ENCODE measurements at regions of chr7 and their contacts with region 1.

Region 1: GRCh38 chr7:142459551-142459963 is 201.7 kb upstream of the PRSS58 start:
- DNase-seq: peak; percentile 56
- ATAC-seq: peak; percentile 63
- H3K4me3 Mint-ChIP-seq: peak overlapping the region; percentile 7
- H3K27ac Mint-ChIP-seq: no peak overlapping the region
- H3K4me1 Mint-ChIP-seq: peaks cover 49% of the 10 kb centered on the region
- H3K27me3 Mint-ChIP-seq: no peaks in the 10 kb centered on the region

Region 2: GRCh38 chr7:142469696-142470543 is 10.4 kb after region 1 on chr7:
- CTCF ChIA-PET with region 1: interaction called, 18 read pairs
- POLR2A ChIA-PET with region 1: no interaction called
- intact Hi-C with region 1: no loop called
- DNase-seq: no peak
- ATAC-seq: no peak
- H3K4me3 Mint-ChIP-seq: no peak overlapping the region
- H3K27ac Mint-ChIP-seq: no peak overlapping the region
- H3K4me1 Mint-ChIP-seq: peaks cover 50% of the 10 kb centered on the region
- H3K27me3 Mint-ChIP-seq: no peaks in the 10 kb centered on the region

Region 3: GRCh38 chr7:142496545-142497041 is 37.0 kb after region 1 on chr7:
- CTCF ChIA-PET with region 1: interaction called, 26 read pairs
- POLR2A ChIA-PET with region 1: no interaction called
- intact Hi-C with region 1: loop called in 1 of 2 experiments (anchors 5 kb)
- DNase-seq: peak; percentile 50
- ATAC-seq: peak; percentile 27
- H3K4me3 Mint-ChIP-seq: peak overlapping the region; percentile 36
- H3K27ac Mint-ChIP-seq: peak overlapping the region; percentile 49
- H3K4me1 Mint-ChIP-seq: peaks cover 50% of the 10 kb centered on the region
- H3K27me3 Mint-ChIP-seq: no peaks in the 10 kb centered on the region

Region 4: DNA sequence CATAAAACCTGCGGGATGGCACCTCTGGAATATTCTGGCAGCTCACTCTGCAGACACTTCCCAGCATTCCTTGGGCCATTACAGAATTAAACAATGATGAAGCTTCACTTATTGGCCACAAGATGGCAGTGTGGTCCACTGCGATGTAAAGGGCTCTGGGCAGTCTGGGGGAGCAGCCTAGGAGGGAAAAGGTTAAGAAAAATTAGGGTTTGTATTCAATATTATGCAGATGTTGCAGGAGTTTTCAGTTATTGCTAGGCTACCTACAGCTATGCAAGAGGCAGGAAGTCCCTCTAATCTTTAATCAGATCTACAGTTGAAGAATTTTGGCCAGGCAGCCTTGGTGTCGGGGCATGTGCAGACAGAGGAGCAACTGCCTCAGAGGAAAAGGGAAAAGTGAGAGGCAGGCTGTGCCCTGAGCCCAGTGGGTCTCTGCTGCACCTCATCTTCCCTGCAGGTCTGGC is 56.5 kb after region 1 on chr7:
- CTCF ChIA-PET with region 1: interaction called, 23 read pairs
- POLR2A ChIA-PET with region 1: no interaction called
- intact Hi-C with region 1: no loop called
- DNase-seq: peak; percentile 59
- ATAC-seq: peak; percentile 82
- H3K4me3 Mint-ChIP-seq: no peak overlapping the region
- H3K27ac Mint-ChIP-seq: no peak overlapping the region
- H3K4me1 Mint-ChIP-seq: peaks cover 48% of the 10 kb centered on the region
- H3K27me3 Mint-ChIP-seq: no peaks in the 10 kb centered on the region

Measured in activated CD4-positive, alpha-beta T cell treated with anti-CD3 and anti-CD28 coated beads for 36 hours (primary cell).